ENCODE measurements at regions of chrX and their contacts with region 1.

Region 1: GRCh38 chrX:119791438-119792231 is at the start of gene RPL39:
- DNase-seq: peak; percentile 52 to 93 (median 74)
- ATAC-seq: peak; percentile 93
- H3K4me3 ChIP-seq: peak within 1 kb of the TSS; percentile 98
- H3K4me3 Mint-ChIP-seq: peak within 1 kb of the TSS; percentile 99
- H3K27ac ChIP-seq: peak within 1 kb of the TSS; percentile 91 to 97
- H3K27ac Mint-ChIP-seq: peak within 1 kb of the TSS; percentile 98
- H3K4me1 ChIP-seq: peaks cover 35% of the 10 kb centered on the region
- H3K4me1 Mint-ChIP-seq: peaks cover 32% of the 10 kb centered on the region
- H3K27me3 ChIP-seq: no peaks in the 10 kb centered on the region
- H3K27me3 Mint-ChIP-seq: no peaks in the 10 kb centered on the region
- CTCF ChIP-seq: no peak
- total RNA-seq, gene RPL39: 3,712 to 3,978 TPM

Region 2: DNA sequence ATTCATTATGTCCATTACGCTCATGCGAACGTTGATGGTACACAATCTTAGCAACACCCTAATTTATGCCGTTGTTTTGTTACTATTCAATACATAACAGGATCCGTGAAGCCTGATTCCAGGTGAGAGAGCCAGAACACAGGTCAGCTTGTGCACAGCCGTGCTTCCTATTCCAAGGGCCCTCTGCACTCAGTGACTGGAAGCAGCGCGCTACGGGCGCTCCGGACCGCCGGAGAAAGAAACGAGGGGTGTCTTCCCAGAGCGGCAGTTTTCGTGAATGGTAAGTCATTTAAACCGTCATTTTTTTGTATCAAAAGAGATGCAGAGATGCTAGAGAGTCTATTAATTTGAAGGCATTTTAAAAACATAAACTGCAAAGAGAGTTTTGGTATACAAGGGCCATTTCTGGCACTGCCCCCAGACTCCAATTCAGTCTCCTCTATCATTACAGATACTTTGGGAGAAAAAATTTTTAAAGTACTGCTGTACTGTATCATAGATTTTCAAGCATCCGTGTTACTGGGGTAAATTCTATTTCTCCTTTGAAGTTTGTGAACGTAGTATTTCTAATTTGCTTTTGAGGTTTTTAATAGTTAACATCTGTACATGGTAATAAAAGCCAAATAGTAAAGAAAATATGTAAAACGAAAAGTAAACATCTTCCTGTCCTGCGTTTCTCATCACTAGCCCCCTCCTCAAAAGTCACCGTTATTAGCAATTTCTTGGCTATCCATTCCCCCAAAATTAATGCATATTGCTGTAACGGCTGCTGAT is 316.8 kb before region 1 on chrX:
- CTCF ChIA-PET with region 1: no interaction called
- POLR2A ChIA-PET with region 1: interaction called, 16 read pairs
- intact Hi-C with region 1: loop called in 1 of 2 experiments (anchors 5 kb)
- DNase-seq: no peak
- ATAC-seq: no peak
- H3K4me3 ChIP-seq: no peak overlapping the region
- H3K4me3 Mint-ChIP-seq: no peak overlapping the region
- H3K27ac ChIP-seq: no peak overlapping the region
- H3K27ac Mint-ChIP-seq: no peak overlapping the region
- H3K4me1 ChIP-seq: peaks cover 5% of the 10 kb centered on the region
- H3K4me1 Mint-ChIP-seq: peaks cover 2% of the 10 kb centered on the region
- H3K27me3 ChIP-seq: no peaks in the 10 kb centered on the region
- H3K27me3 Mint-ChIP-seq: no peaks in the 10 kb centered on the region
- CTCF ChIP-seq: no peak

Region 3: GRCh38 chrX:119693040-119693995 is 98.3 kb before region 1 on chrX and contains the start of gene SEPTIN6:
- CTCF ChIA-PET with region 1: interaction called, 3 read pairs
- POLR2A ChIA-PET with region 1: interaction called, 29 read pairs
- intact Hi-C with region 1: no loop called
- DNase-seq: peak; percentile 68 to 91 (median 83)
- ATAC-seq: peak; percentile 57
- H3K4me3 ChIP-seq: peak within 1 kb of the TSS; percentile 81
- H3K4me3 Mint-ChIP-seq: peak within 1 kb of the TSS; percentile 97
- H3K27ac ChIP-seq: peak within 1 kb of the TSS; percentile 64 to 85
- H3K27ac Mint-ChIP-seq: peak within 1 kb of the TSS; percentile 96
- H3K4me1 ChIP-seq: peaks cover 27% of the 10 kb centered on the region
- H3K4me1 Mint-ChIP-seq: peaks cover 22% of the 10 kb centered on the region
- H3K27me3 ChIP-seq: no peaks in the 10 kb centered on the region
- H3K27me3 Mint-ChIP-seq: no peaks in the 10 kb centered on the region
- CTCF ChIP-seq: no peak
- total RNA-seq, gene SEPTIN6: 132 to 134 TPM

Region 4: DNA sequence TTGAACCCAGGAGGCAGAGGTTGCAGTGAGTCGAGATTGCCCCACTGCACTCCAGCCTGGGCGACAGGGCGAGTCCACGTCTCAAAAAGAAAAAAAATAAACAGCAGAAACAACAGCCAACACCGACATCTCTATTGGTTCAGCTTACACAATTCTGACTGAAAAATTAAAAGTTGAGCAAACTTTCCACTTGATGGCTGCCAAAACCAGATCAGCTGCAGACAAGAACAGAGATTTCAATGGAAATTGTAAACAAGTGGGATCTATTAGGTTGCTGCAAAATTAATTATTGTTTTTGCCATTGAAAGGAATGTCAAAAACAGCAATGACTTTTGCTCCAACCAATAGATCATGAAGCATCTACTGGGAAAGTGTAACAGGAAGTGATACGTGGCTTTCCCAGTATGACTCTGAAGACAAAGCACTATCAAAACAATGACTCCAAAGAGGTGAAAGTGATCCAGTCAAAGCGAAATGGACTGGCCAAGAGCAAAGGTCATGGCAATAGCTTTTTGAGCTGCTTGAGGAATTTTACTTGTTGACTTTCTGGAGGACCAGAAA is 34.8 kb after region 1 on chrX:
- CTCF ChIA-PET with region 1: no interaction called
- POLR2A ChIA-PET with region 1: interaction called, 19 read pairs
- intact Hi-C with region 1: no loop called
- DNase-seq: no peak
- ATAC-seq: no peak
- H3K4me3 ChIP-seq: no peak overlapping the region
- H3K4me3 Mint-ChIP-seq: no peak overlapping the region
- H3K27ac ChIP-seq: no peak overlapping the region
- H3K27ac Mint-ChIP-seq: no peak overlapping the region
- H3K4me1 ChIP-seq: peaks cover under 1% of the 10 kb centered on the region
- H3K4me1 Mint-ChIP-seq: peaks cover 15% of the 10 kb centered on the region
- H3K27me3 ChIP-seq: no peaks in the 10 kb centered on the region
- H3K27me3 Mint-ChIP-seq: no peaks in the 10 kb centered on the region
- CTCF ChIP-seq: no peak

Region 5: GRCh38 chrX:119871599-119872395 is 80.2 kb after region 1 on chrX and contains the starts of genes NDUFA1 and RNF113A:
- CTCF ChIA-PET with region 1: no interaction called
- POLR2A ChIA-PET with region 1: interaction called, 60 read pairs
- intact Hi-C with region 1: loop called in 1 of 2 experiments (anchors 5 kb)
- DNase-seq: peak; percentile 72 to 95 (median 82)
- ATAC-seq: peak; percentile 87
- H3K4me3 ChIP-seq: peak within 1 kb of the TSS; percentile 86
- H3K4me3 Mint-ChIP-seq: peak within 1 kb of the TSS; percentile 97
- H3K27ac ChIP-seq: peak within 1 kb of the TSS; percentile 87 to 96
- H3K27ac Mint-ChIP-seq: peak within 1 kb of the TSS; percentile 94
- H3K4me1 ChIP-seq: peaks cover 21% of the 10 kb centered on the region
- H3K4me1 Mint-ChIP-seq: peaks cover 27% of the 10 kb centered on the region
- H3K27me3 ChIP-seq: no peaks in the 10 kb centered on the region
- H3K27me3 Mint-ChIP-seq: no peaks in the 10 kb centered on the region
- CTCF ChIP-seq: no peak
- total RNA-seq, gene NDUFA1: 45.4 to 46.2 TPM
- total RNA-seq, gene RNF113A: 32.5 to 33.5 TPM

Region 6: GRCh38 chrX:119943185-119943988 is 151.8 kb after region 1 on chrX and contains the start of gene NKAP:
- CTCF ChIA-PET with region 1: no interaction called
- POLR2A ChIA-PET with region 1: no interaction called
- intact Hi-C with region 1: loop called in 1 of 2 experiments (anchors 5 kb)
- DNase-seq: peak; percentile 64 to 91 (median 72)
- ATAC-seq: peak; percentile 84
- H3K4me3 ChIP-seq: peak within 1 kb of the TSS; percentile 95
- H3K4me3 Mint-ChIP-seq: peak within 1 kb of the TSS; percentile 96
- H3K27ac ChIP-seq: peak within 1 kb of the TSS; percentile 91 to 93
- H3K27ac Mint-ChIP-seq: peak within 1 kb of the TSS; percentile 87
- H3K4me1 ChIP-seq: peaks cover 19% of the 10 kb centered on the region
- H3K4me1 Mint-ChIP-seq: peaks cover 27% of the 10 kb centered on the region
- H3K27me3 ChIP-seq: no peaks in the 10 kb centered on the region
- H3K27me3 Mint-ChIP-seq: peaks cover 2% of the 10 kb centered on the region
- CTCF ChIP-seq: no peak
- total RNA-seq, gene NKAP: 14.5 to 15.6 TPM

Region 7: DNA sequence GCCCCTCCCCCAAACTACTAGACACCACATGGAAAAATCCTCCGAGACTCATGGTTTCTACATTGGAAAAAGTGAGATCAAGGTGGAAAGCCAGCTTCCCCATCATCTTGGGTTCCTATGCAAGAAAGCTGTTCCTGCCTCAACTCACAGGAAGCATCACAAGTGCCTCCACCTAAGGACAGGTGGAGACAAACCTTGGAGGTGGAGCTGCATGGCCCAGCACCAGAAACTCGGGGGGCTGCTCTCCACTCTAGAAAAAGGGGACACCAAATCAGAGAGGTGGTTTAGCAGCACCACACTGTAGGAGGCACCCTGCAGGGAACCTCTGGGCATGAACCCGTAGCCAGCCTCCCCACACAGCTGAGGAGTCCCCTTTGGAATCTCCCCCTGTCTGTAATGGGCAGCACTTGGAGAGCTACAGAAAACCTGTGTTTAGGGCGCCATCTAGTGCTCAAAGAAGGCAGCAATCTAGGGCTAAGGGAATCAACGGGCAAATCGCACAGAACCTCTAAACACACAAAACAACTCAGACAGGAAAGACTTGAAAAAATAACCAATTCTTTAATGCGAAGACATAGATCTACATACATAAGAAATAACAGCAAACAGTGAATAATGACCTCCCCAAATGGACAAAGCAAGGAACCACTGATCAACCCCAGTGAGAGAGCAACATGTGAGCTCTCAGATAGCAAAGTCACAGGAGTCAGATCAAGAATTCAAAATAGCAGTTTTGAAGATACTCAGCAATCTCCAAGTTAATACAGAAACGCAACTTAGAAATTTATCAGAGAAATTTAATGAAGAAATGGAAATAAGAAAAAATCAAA is 422.0 kb after region 1 on chrX:
- CTCF ChIA-PET with region 1: no interaction called
- POLR2A ChIA-PET with region 1: no interaction called
- intact Hi-C with region 1: no loop called
- DNase-seq: peak; percentile 19 to 72 (median 37)
- ATAC-seq: peak; percentile 60
- H3K4me3 ChIP-seq: no peak overlapping the region
- H3K4me3 Mint-ChIP-seq: no peak overlapping the region
- H3K27ac ChIP-seq: no peak overlapping the region
- H3K27ac Mint-ChIP-seq: no peak overlapping the region
- H3K4me1 ChIP-seq: no peaks in the 10 kb centered on the region
- H3K4me1 Mint-ChIP-seq: peaks cover 5% of the 10 kb centered on the region
- H3K27me3 ChIP-seq: no peaks in the 10 kb centered on the region
- H3K27me3 Mint-ChIP-seq: no peaks in the 10 kb centered on the region
- CTCF ChIP-seq: peak; percentile 63

Measured in CD4-positive, alpha-beta T cell (primary cell).